ENCODE measurements at regions of chr12 and their contacts with region 1.

Region 1: GRCh38 chr12:48197971-48198671 is 5.0 kb downstream of the OR10AD1 start:
- DNase-seq: peak; percentile 68 to 95 (median 84)
- ATAC-seq: peak; percentile 87 to 89
- H3K4me3 Mint-ChIP-seq: peak overlapping the region; percentile 83 to 97 (median 89)
- H3K27ac Mint-ChIP-seq: peak overlapping the region; percentile 91 to 99 (median 96)
- H3K4me1 Mint-ChIP-seq: peaks cover 35 to 55% (median 45%) of the 10 kb centered on the region in 4 donors
- H3K27me3 Mint-ChIP-seq: peaks cover 0 to 14% (median 8%) of the 10 kb centered on the region in 5 donors

Region 2: GRCh38 chr12:48105862-48106680 is 92.0 kb before region 1 on chr12 and contains the start of gene SENP1:
- POLR2A ChIA-PET with region 1: interaction called, 27 read pairs
- DNase-seq: peak; percentile 76 to 96 (median 88)
- ATAC-seq: peak; percentile 81 to 84
- H3K4me3 Mint-ChIP-seq: peak within 1 kb of the TSS; percentile 89 to 99 (median 94)
- H3K27ac Mint-ChIP-seq: peak within 1 kb of the TSS; percentile 96 to 100 (median 99)
- H3K4me1 Mint-ChIP-seq: peaks cover 27 to 58% (median 48%) of the 10 kb centered on the region in 4 donors
- H3K27me3 Mint-ChIP-seq: no peaks in the 10 kb centered on the region
- polyA plus RNA-seq, gene SENP1: 9.9 to 11.9 (median 10.2) TPM

Region 3: GRCh38 chr12:48157018-48157888 is 40.9 kb before region 1 on chr12 and contains the start of gene ASB8:
- POLR2A ChIA-PET with region 1: interaction called, 41 read pairs
- DNase-seq: peak; percentile 97 to 99 (median 99)
- ATAC-seq: peak; percentile 93
- H3K4me3 Mint-ChIP-seq: peak within 1 kb of the TSS; percentile 93 to 99 (median 96)
- H3K27ac Mint-ChIP-seq: peak within 1 kb of the TSS; percentile 98 to 100 (median 99)
- H3K4me1 Mint-ChIP-seq: peaks cover 24 to 56% (median 54%) of the 10 kb centered on the region in 4 donors
- H3K27me3 Mint-ChIP-seq: peaks cover 0 to 2% (median 0%) of the 10 kb centered on the region in 5 donors
- polyA plus RNA-seq, gene ASB8: 61.2 to 75.6 (median 64.4) TPM

Region 4: GRCh38 chr12:48183091-48183875 is 14.8 kb before region 1 on chr12 and contains the start of gene CCDC184:
- POLR2A ChIA-PET with region 1: interaction called, 35 read pairs
- DNase-seq: peak; percentile 48 to 92 (median 80)
- ATAC-seq: peak; percentile 77 to 81
- H3K4me3 Mint-ChIP-seq: peak within 1 kb of the TSS; percentile 88 to 98 (median 96)
- H3K27ac Mint-ChIP-seq: peak within 1 kb of the TSS; percentile 72 to 98 (median 92)
- H3K4me1 Mint-ChIP-seq: peaks cover 8 to 23% (median 19%) of the 10 kb centered on the region in 4 donors
- H3K27me3 Mint-ChIP-seq: peaks cover 16 to 57% (median 36%) of the 10 kb centered on the region in 5 donors
- polyA plus RNA-seq, gene CCDC184: 0.11 to 0.13 TPM in 2 of 3 donors, not detected in the other

Region 5: DNA sequence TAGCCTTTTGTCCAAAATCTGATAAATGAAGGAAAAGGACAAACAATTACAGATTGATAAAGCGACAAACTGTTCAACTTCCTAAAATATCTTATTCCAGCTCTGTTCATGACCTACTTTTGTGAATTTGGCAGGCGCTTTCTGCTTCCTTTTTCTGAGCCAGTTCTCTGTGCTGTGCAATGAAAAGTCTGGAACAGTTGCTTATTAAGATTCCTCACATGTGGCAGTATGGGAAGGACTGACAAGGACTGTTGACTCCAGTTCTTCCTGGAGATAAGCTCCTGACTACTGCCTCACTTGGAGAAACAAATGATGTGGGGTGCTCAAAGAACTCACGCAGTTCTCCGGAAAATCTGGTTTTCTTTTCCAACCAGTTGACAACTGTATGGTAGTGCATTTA is 215.9 kb after region 1 on chr12:
- POLR2A ChIA-PET with region 1: interaction called, 19 read pairs
- DNase-seq: no peak
- ATAC-seq: no peak
- H3K4me3 Mint-ChIP-seq: no peak overlapping the region
- H3K27ac Mint-ChIP-seq: no peak overlapping the region
- H3K4me1 Mint-ChIP-seq: peaks cover 4 to 19% (median 14%) of the 10 kb centered on the region in 4 donors
- H3K27me3 Mint-ChIP-seq: peaks cover 0 to 26% (median 10%) of the 10 kb centered on the region in 5 donors